Head of caudate nucleus (tissue), 42 donors: ENCODE measurements at regions of chr14 and their contacts with region 1.

Region 1: DNA sequence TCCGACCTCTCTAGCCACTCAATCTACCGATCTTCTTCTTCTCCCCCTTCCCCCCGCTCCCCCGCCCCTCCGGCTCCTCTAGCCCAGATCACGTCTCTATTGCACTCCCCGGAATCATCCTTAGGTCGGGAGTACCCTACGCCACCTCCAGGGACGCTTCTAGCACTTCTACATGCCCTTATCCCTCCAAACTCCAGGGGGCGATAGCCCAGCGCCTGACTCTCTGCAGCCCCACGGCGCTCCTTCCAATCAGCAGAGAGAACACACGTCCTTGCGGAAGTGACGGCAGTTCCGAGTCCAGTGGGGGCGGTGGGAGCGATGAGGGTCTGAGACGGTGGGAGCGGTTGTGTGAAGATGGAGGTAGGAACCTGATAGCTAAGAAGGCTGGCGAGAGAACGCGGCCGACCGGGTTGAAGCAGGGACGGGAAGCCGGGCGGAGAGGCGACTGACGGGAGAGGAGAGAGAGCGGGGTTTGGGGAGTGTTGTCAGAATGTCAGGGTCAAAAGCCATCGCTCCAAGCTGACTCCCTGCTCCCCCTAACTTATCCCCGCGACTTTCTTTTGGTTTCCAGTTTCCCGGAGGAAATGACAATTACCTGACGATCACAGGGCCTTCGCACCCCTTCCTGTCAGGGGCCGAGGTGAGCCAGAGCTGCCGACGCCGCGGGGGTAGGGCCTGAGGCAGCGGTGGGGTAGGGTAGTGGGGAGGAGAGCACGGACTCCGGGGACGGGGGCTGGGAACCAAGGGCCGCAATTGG is at the starts of genes RAB2B and TOX4:
- DNase-seq: peak; percentile 93 to 100 (median 98)

Region 2: GRCh38 chr14:20587489-20588154 is 889.5 kb before region 1 on chr14 and contains the start of gene RNASE11:
- intact Hi-C with region 1: no loop called
- DNase-seq: no peak

Region 3: GRCh38 chr14:20743256-20743959 is 733.7 kb before region 1 on chr14:
- intact Hi-C with region 1: no loop called
- DNase-seq: no peak

Region 4: DNA sequence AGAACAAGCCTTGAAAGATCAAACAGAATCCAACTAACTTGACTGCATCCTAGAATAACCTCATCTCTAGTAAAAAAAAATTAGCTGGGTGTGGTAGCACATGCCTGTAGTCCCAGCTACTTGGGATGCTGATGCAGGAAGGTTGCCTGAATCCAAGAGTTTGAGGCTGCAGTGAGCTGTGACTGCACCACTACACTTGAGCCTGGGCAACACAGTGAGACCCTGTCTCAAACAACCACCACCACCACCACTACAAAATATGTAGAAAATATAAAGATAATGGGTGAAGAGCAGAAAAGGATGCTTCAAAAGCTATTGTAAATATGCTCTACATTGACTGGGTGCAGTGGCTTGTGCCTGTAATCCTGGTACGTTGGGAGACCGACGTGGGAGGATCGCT is 120.6 kb before region 1 on chr14:
- intact Hi-C with region 1: no loop called
- DNase-seq: no peak

Region 5: GRCh38 chr14:21455911-21456667 is 21.0 kb before region 1 on chr14 and contains the start of gene CHD8:
- intact Hi-C with region 1: loop called (anchors 1 kb)
- DNase-seq: peak; percentile 98 to 100 (median 100)

Region 6: GRCh38 chr14:21510735-21511657 is 33.9 kb after region 1 on chr14 and contains the start of gene METTL3:
- intact Hi-C with region 1: loop called (anchors 2 kb)
- DNase-seq: peak; percentile 89 to 99 (median 97)